Naive thymus-derived CD4-positive, alpha-beta T cell (primary cell): ENCODE measurements at regions of chr7 and their contacts with region 1.

Region 1: DNA sequence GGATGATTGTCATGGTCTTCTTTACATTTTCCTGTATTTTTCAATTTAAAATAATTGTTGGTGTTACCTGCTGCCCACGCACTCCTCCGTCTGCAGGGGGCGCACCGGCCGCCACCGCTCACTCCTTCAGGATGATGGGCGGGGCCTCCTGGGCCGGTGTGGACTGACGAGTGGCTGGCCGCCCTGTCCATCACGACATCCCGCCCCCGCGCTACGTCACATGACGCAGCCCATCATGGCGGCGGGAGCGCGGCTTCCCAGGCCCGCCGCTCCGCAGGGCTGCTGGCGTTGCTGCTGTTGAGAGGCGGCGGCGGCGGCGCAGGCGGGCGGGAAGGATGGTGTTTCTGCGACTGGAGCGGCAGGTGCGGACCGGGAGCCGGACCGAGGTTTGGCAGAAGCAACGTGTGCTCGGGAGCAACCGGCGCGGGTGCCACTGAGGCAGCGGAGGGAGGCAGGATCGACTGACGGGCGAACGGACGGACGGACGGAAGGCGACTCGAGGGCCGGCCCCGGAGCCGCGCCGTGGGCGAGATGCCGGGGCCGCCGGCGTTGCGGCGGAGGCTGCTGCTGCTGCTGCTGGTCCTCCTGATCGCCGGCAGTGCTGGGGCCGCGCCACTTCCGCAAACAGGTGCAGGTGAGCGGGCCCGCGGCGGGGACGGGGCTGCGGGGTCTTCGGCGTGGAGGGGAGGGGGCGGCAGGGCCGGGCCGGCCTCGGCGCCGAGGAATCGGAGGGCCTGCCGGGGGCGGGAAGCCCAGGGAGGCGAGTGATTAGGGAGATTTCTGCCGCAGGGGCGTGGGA is at the start of gene LMTK2:
- DNase-seq: peak; percentile 92 to 100 (median 97)
- ATAC-seq: peak; percentile 100
- H3K4me3 ChIP-seq: peak within 1 kb of the TSS; percentile 66
- H3K4me3 Mint-ChIP-seq: peak within 1 kb of the TSS; percentile 90 to 99 (median 96)
- H3K27ac ChIP-seq: peak within 1 kb of the TSS; percentile 92
- H3K27ac Mint-ChIP-seq: peak within 1 kb of the TSS; percentile 22 to 97 (median 89)
- H3K4me1 ChIP-seq: peaks cover 10 to 26% of the 10 kb centered on the region in 2 donors
- H3K4me1 Mint-ChIP-seq: peaks cover 23 to 51% (median 48%) of the 10 kb centered on the region in 7 donors
- H3K27me3 ChIP-seq: no peaks in the 10 kb centered on the region
- H3K27me3 Mint-ChIP-seq: peaks cover 0 to 12% (median 7%) of the 10 kb centered on the region in 5 donors
- total RNA-seq, gene LMTK2: 13.2 to 29.1 (median 25.9) TPM

Region 2: DNA sequence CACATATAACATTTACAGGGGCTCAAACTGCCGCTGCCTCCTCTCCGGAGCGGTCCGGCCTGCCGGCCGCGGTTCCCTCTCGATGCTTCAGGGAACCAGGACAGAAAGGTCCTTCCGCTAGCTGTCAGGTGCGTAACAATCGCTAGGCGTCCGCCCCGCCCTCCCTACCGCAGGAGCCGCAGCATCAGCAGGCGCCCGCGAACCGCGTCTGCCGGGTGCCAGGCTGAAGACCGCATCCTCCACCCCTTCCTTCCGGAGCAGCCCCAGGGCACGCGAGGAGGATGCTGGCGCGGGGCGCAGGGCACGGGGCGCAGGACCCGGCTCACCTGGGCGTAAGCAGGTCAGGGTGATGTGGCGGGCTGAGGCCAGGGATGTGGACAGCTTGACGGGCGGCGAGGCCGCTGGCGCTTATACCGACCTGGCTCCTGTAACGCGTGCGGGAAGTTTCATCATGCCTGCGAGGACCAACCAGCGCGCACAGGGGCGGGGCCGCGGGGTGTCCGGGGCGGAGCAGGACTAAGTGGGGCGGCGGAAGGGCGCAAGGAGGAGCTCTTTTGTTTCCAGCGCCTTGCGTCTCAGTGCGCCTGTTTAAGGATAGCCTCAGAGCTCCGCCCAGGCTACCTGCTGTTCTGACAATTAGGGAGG is 234.7 kb before region 1 on chr7 and contains the start of gene ASNS:
- CTCF ChIA-PET with region 1: no interaction called
- POLR2A ChIA-PET with region 1: no interaction called
- intact Hi-C with region 1: loop called in 1 of 2 experiments (anchors 1 kb)
- DNase-seq: peak; percentile 59 to 92 (median 82)
- ATAC-seq: peak; percentile 92
- H3K4me3 ChIP-seq: peak within 1 kb of the TSS; percentile 79
- H3K4me3 Mint-ChIP-seq: peak within 1 kb of the TSS; percentile 87 to 92 (median 91)
- H3K27ac ChIP-seq: peak within 1 kb of the TSS; percentile 76
- H3K27ac Mint-ChIP-seq: peak within 1 kb of the TSS; percentile 66 to 93 (median 91)
- H3K4me1 ChIP-seq: peaks cover 0 to 15% of the 10 kb centered on the region in 2 donors
- H3K4me1 Mint-ChIP-seq: peaks cover 9 to 26% (median 15%) of the 10 kb centered on the region in 7 donors
- H3K27me3 ChIP-seq: no peaks in the 10 kb centered on the region
- H3K27me3 Mint-ChIP-seq: no peaks in the 10 kb centered on the region
- total RNA-seq, gene ASNS: 23.1 to 49.3 (median 31.8) TPM

Region 3: DNA sequence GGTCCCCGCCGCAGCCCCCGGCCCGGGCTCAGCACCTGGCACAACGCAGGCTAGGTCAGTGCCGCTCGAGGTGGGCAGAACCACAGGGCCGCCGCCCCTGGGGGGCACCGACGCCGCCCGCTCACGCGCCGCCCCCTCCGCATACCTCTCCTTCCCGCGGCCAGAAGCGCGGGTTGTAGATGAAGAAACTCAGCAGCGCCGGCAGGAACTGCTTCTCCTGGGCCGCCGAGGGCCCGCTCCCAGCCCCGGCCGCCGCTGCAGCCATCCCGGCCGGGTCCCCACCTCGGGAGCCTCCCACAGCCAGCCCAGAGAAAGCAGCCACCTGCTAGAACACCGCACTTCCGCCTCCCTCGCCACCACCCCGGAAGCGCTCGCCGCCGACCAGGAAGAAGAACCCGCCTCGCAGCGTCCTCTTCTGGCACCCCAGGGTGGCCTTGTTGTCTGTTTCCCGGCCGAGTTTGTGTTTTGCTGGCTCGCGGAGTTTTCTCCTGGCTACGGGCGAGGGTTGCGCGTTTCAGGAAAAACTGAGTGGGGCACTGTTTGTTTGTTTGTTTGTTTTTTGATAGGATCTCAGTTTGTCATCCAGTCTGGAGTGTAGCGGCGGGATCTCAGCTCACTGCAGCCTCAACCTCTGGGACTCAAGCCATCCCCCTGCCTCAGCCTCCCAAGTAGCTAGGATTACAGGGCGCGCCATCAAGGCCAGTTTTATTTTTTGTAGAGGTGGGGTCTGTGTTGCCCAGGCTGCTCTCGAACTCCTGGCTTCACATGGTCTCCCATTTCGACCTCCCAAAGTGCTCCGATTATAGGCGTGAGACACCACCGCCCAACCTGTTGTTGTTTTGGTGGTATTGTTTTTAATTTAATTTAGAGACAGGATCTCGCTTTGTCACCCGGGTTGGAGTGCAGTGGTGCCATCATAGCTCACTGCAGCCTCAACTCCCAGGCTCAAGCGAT is 134.6 kb before region 1 on chr7:
- CTCF ChIA-PET with region 1: no interaction called
- POLR2A ChIA-PET with region 1: no interaction called
- intact Hi-C with region 1: loop called (anchors 1 kb)
- DNase-seq: peak; percentile 68 to 86 (median 83)
- ATAC-seq: peak; percentile 94
- H3K4me3 ChIP-seq: peak overlapping the region; percentile 87
- H3K4me3 Mint-ChIP-seq: peak overlapping the region; percentile 90 to 98 (median 96)
- H3K27ac ChIP-seq: peak overlapping the region; percentile 84
- H3K27ac Mint-ChIP-seq: peak overlapping the region; percentile 94 to 97 (median 96)
- H3K4me1 ChIP-seq: peaks cover 10% of the 10 kb centered on the region in 2 donors
- H3K4me1 Mint-ChIP-seq: peaks cover 5 to 37% (median 17%) of the 10 kb centered on the region in 7 donors
- H3K27me3 ChIP-seq: no peaks in the 10 kb centered on the region
- H3K27me3 Mint-ChIP-seq: peaks cover 0 to 3% (median 0%) of the 10 kb centered on the region in 5 donors

Region 4: DNA sequence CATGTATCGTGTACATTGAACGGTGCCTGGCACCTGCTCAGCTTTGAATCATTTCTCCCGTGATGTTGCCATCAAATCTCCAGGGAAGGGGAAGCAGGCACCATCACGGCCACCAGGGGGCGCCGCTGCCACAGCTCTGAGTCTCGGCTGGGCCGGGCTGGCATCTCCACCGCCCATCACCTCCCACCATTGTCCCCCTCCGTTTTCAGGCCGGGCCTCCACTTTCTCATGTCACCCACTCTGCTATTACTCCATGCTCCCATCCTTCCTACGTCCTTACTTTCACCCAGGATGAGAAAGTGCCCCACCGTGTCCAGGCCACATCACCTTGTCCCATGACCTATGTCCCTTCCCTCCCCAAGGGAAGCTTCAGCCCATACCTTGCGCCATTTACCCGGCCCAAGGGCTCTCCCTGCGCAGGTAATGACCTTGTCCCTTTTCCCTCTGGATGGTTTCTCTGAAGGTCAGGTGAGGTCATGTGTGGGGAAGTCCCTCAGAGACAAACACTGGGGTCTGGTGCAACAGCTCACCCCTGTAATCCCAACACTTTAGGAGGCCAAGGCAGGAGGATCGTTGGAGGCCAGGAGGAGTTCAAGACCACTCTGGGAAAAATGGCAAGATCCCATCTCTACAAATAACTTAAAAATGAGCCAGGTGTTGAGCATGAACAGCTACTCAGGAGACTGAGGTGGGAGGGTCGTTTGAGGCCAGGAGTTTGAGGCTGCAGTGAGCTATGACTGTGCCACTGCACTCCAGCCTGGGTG is 85.1 kb before region 1 on chr7:
- CTCF ChIA-PET with region 1: no interaction called
- POLR2A ChIA-PET with region 1: no interaction called
- intact Hi-C with region 1: loop called (anchors 1 kb)
- DNase-seq: peak; percentile 44 to 84 (median 72)
- ATAC-seq: peak; percentile 88
- H3K4me3 ChIP-seq: no peak overlapping the region
- H3K4me3 Mint-ChIP-seq: no peak overlapping the region
- H3K27ac ChIP-seq: no peak overlapping the region
- H3K27ac Mint-ChIP-seq: peak overlapping the region in 1 of 9 donors; percentile 27
- H3K4me1 ChIP-seq: no peaks in the 10 kb centered on the region
- H3K4me1 Mint-ChIP-seq: peaks cover 0 to 5% (median 5%) of the 10 kb centered on the region in 7 donors
- H3K27me3 ChIP-seq: no peaks in the 10 kb centered on the region
- H3K27me3 Mint-ChIP-seq: peaks cover 0 to 10% (median 7%) of the 10 kb centered on the region in 5 donors

Region 5: DNA sequence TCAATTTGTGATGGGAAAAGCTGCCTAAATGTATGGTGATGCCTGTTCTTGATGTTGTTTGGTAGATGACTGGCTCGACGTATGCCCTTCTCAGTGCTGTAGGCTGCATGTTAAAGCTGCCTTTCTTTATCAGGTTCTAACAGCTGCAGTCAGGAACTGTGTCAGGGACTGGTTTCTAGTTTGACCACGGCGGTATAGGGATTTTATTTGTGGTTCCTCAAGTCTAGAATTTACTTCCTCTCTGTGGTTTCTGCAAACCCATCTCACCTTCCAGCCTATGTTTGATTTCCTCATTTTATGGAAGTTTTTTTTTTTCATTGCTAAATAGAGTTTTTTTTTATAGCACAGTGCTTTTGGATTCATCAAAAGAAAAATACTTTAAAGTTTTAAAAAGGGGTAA is 26.3 kb after region 1 on chr7:
- CTCF ChIA-PET with region 1: interaction called, 8 read pairs
- POLR2A ChIA-PET with region 1: interaction called, 3 read pairs
- intact Hi-C with region 1: loop called (anchors 1 kb)
- DNase-seq: peak in 6 of 9 donors; percentile 9 to 20 (median 16)
- ATAC-seq: peak; percentile 66
- H3K4me3 ChIP-seq: peak overlapping the region; percentile 11
- H3K4me3 Mint-ChIP-seq: peak overlapping the region; percentile 43 to 80 (median 60)
- H3K27ac ChIP-seq: no peak overlapping the region
- H3K27ac Mint-ChIP-seq: peak overlapping the region in 4 of 9 donors; percentile 2 to 15 (median 10)
- H3K4me1 ChIP-seq: peaks cover 30% of the 10 kb centered on the region in 2 donors
- H3K4me1 Mint-ChIP-seq: peaks cover 37 to 66% (median 57%) of the 10 kb centered on the region in 7 donors
- H3K27me3 ChIP-seq: no peaks in the 10 kb centered on the region
- H3K27me3 Mint-ChIP-seq: peaks cover 0 to 35% (median 0%) of the 10 kb centered on the region in 5 donors

Region 6: DNA sequence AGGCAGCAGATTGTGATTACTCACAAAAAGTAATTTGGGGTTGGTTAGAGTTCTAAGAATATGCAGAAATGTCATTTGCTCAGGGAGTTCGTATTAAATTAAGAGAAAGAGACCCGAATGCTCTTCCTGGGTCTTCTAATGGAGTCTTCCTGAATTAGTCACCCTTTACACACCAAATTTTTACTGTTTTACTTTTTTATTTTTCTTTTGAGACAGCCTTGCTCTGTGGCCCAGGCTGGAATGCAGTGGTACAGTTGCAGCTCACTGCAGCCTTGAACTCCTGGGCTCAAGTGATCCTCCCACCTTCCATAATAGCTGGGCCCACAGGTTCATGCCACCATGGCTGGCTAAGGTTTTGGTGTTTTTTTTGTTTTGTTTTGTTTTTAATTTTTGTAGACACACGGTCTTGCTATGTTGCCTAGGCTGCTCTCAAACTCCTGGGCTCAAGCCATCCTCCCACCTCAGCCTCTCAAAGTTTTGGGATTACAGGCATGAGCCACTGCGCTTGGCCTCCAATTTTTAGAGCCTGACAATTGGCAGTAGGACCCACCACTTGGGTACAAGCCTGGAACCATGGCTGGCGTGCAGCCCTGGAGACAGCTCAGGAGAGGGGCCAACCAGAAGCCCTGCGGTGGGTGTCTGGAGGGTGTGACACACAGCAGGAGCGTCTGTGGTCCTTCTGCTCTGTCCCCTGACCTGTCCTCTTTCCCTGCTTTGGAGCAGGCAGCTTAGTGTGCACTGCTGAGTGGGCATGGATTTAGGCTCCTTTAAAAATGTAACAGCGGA is 88.0 kb after region 1 on chr7:
- CTCF ChIA-PET with region 1: no interaction called
- POLR2A ChIA-PET with region 1: no interaction called
- intact Hi-C with region 1: no loop called
- DNase-seq: no peak
- ATAC-seq: no peak
- H3K4me3 ChIP-seq: no peak overlapping the region
- H3K4me3 Mint-ChIP-seq: no peak overlapping the region
- H3K27ac ChIP-seq: no peak overlapping the region
- H3K27ac Mint-ChIP-seq: peak overlapping the region in 1 of 9 donors; percentile 48
- H3K4me1 ChIP-seq: no peaks in the 10 kb centered on the region
- H3K4me1 Mint-ChIP-seq: peaks cover 2 to 22% (median 13%) of the 10 kb centered on the region in 7 donors
- H3K27me3 ChIP-seq: no peaks in the 10 kb centered on the region
- H3K27me3 Mint-ChIP-seq: no peaks in the 10 kb centered on the region